Panc1 (cell line): ENCODE measurements at regions of chr6 and their contacts with region 1.

Region 1: GRCh38 chr6:93419304-93420162 is at the start of gene EPHA7:
- DNase-seq: peak; percentile 86
- ATAC-seq: peak; percentile 92
- H3K4me3 ChIP-seq: peak within 1 kb of the TSS; percentile 67 to 76
- H3K27ac ChIP-seq: peak within 1 kb of the TSS; percentile 94
- H3K4me1 ChIP-seq: peaks cover 5% of the 10 kb centered on the region; the same call in 1 of the 2 replicates
- H3K27me3 ChIP-seq: peaks cover 6% of the 10 kb centered on the region
- CTCF ChIP-seq: no peak
- total RNA-seq, gene EPHA7: 8.6 TPM

Region 2: DNA sequence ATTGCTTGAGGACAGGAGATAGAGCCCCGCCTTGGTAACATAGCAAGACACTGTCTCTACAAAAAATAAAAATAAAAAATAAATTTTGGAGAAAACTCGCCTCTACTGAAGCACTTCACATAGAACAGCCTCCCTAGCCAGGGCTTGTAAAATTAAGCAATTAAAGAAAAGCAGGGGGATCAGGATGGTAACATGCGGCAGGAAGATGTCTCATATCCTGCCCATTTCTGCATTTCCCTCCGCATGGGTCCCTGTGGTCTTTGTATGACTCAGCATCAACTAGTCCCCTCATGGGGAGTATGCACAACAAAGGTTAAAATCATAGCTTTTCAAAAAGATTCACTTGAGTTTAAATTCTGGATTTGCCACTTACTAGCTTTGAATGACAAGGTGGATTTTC is 379.2 kb before region 1 on chr6:
- CTCF ChIA-PET with region 1: no interaction called
- POLR2A ChIA-PET with region 1: no interaction called
- in situ Hi-C with region 1: no loop called
- intact Hi-C with region 1: loop called (anchors 10 kb)
- DNase-seq: no peak
- ATAC-seq: no peak
- H3K4me3 ChIP-seq: no peak overlapping the region
- H3K27ac ChIP-seq: no peak overlapping the region
- H3K4me1 ChIP-seq: no peaks in the 10 kb centered on the region
- H3K27me3 ChIP-seq: no peaks in the 10 kb centered on the region
- CTCF ChIP-seq: no peak

Region 3: GRCh38 chr6:93784794-93785693 is 365.5 kb after region 1 on chr6:
- CTCF ChIA-PET with region 1: no interaction called
- POLR2A ChIA-PET with region 1: interaction called, 3 read pairs
- in situ Hi-C with region 1: no loop called
- intact Hi-C with region 1: loop called (anchors 10 kb)
- DNase-seq: peak; percentile 84
- ATAC-seq: peak; percentile 97
- H3K4me3 ChIP-seq: peak overlapping the region; percentile 29 to 47
- H3K27ac ChIP-seq: peak overlapping the region; percentile 98
- H3K4me1 ChIP-seq: peaks cover 29% of the 10 kb centered on the region
- H3K27me3 ChIP-seq: no peaks in the 10 kb centered on the region
- CTCF ChIP-seq: no peak

Region 4: DNA sequence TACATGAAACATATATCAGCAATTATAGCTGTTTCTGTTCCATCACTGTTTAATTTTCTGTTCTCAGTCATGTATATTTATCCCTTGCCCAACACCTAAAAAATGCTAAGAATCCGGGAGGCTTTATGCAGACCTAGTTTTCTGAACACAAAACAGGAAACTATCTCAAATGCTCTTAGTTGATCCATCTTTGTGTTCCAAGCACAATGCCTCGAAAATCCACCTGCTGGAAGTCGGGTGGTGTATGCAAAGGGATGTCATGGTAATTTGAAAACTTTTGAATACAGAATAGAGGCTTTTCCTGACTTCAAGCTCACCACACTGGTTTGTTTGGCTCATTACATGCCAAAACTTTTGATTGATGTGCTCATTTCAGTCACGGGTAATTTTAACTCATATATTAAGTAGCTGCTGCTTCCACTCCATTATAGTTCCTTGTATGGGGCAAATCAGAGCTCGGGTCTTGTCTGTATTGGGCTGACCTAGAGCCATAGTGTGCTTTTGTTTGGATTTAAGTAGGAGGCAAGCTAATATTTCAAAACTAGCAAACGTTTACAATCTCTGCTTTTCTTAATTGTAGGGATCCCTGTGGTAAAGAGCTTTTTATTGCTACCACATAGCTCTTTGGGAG is 646.3 kb after region 1 on chr6:
- CTCF ChIA-PET with region 1: no interaction called
- POLR2A ChIA-PET with region 1: no interaction called
- in situ Hi-C with region 1: no loop called
- intact Hi-C with region 1: loop called (anchors 10 kb)
- DNase-seq: no peak
- ATAC-seq: no peak
- H3K4me3 ChIP-seq: no peak overlapping the region
- H3K27ac ChIP-seq: no peak overlapping the region
- H3K4me1 ChIP-seq: no peaks in the 10 kb centered on the region
- H3K27me3 ChIP-seq: no peaks in the 10 kb centered on the region
- CTCF ChIP-seq: no peak

Region 5: DNA sequence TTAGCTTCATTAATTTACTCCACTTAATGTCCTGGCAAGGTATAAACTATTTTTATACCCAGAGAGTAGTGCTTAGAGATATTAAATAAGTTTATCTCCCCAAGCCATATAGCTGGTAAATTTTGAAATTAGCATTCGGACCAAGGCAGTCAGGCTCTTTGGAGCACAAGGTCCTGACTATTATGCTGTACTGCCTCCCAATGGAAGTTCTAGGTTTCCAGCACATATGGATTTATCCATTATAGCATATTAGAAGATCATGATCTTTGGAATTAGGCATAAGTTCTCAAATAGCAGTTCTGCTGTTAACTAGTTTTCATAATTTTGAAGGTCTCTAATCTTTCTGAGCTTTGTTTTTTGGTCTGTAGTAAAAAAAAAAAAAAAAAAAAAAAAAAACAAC is 835.2 kb after region 1 on chr6:
- CTCF ChIA-PET with region 1: no interaction called
- POLR2A ChIA-PET with region 1: no interaction called
- in situ Hi-C with region 1: no loop called
- intact Hi-C with region 1: loop called (anchors 10 kb)
- DNase-seq: no peak
- ATAC-seq: no peak
- H3K4me3 ChIP-seq: no peak overlapping the region
- H3K27ac ChIP-seq: no peak overlapping the region
- H3K4me1 ChIP-seq: no peaks in the 10 kb centered on the region; the same call in 1 of the 2 replicates
- H3K27me3 ChIP-seq: no peaks in the 10 kb centered on the region
- CTCF ChIP-seq: peak; percentile 69; the same call in 1 of the 2 replicates